GM12878 (cell line): ENCODE measurements at regions of chr19 and their contacts with region 1.

Region 1: GRCh38 chr19:43754503-43755255 is at the start of gene SMG9:
- DNase-seq: peak; percentile 89
- ATAC-seq: peak; percentile 77
- H3K4me3 ChIP-seq: peak within 1 kb of the TSS; percentile 84
- H3K27ac ChIP-seq: peak within 1 kb of the TSS; percentile 98
- H3K4me1 ChIP-seq: peaks cover 46% of the 10 kb centered on the region
- H3K27me3 ChIP-seq: no peaks in the 10 kb centered on the region
- CTCF ChIP-seq: no peak
- EP300 ChIP-seq: peak; percentile 27 to 28; a peak in 1 of 4 replicates
- POLR2A ChIP-seq: peak; percentile 94
- RAD21 ChIP-seq: no peak
- polyA plus RNA-seq, gene SMG9: 0.69 to 4.0 TPM

Region 2: DNA sequence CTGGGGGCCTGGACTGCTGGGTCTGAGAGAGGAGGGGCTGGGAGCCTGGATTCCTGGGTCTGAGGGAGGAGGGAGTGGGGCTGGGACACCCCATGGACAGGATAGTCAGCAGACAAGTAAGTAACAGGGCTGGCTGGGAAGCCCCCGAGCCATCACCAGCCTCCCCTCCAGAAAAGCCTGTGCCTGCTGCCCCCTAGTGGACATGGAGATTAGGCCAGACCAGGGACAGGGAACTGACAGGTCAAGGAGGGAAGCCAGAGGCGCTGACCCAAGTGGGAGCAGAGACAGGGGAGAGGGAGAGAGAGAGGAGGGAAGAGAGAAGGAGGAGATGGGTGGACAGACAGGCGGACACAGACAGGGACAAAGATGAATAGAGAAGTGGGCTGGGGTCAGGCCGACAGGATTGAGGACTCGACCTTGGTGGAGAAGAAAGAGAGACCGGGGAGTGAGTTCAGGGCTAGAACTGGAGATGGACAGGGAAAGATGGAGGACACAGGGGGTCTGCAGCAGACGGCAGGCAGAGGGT is 1819.8 kb before region 1 on chr19:
- CTCF ChIA-PET with region 1: no interaction called
- POLR2A ChIA-PET with region 1: no interaction called
- RAD21 ChIA-PET with region 1: no interaction called
- SMC1A ChIA-PET with region 1: no interaction called
- in situ Hi-C with region 1: loop called (anchors 25 kb)
- intact Hi-C with region 1: no loop called
- DNase-seq: no peak
- ATAC-seq: peak; percentile 93
- H3K4me3 ChIP-seq: no peak overlapping the region
- H3K27ac ChIP-seq: no peak overlapping the region
- H3K4me1 ChIP-seq: peaks cover 23% of the 10 kb centered on the region
- H3K27me3 ChIP-seq: peaks cover 0 to 6% of the 10 kb centered on the region in 2 experiments
- CTCF ChIP-seq: peak; percentile 92 to 97 (median 94); a peak in 5 of 6 replicates
- EP300 ChIP-seq: no peak
- POLR2A ChIP-seq: no peak
- RAD21 ChIP-seq: peak; percentile 94

Region 3: DNA sequence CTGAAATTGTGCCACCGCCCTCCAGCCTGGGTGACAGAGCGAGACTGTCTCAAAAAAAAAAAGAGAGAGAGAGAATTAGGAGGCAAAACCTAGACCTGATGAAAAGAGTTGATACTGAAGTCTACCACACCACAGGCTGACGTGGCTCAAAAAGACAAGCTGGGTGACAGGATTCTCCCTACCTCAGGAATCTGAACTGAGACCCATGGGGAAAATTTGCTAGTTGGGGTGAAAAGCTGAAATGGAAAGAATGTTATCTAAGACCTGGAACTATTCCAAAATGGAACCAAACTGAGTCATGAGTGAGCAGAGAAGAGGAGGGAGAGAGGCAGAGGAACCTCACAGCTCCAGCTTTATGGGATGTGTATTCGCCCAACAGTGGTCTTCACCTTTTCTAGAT is 11.7 kb before region 1 on chr19:
- CTCF ChIA-PET with region 1: interaction called, 20 read pairs
- POLR2A ChIA-PET with region 1: interaction called, 307 read pairs
- RAD21 ChIA-PET with region 1: interaction called, 19 read pairs
- SMC1A ChIA-PET with region 1: interaction called, 12 read pairs
- in situ Hi-C with region 1: no loop called
- intact Hi-C with region 1: no loop called
- DNase-seq: no peak
- ATAC-seq: no peak
- H3K4me3 ChIP-seq: no peak overlapping the region
- H3K27ac ChIP-seq: no peak overlapping the region
- H3K4me1 ChIP-seq: peaks cover 19% of the 10 kb centered on the region
- H3K27me3 ChIP-seq: no peaks in the 10 kb centered on the region
- CTCF ChIP-seq: no peak
- EP300 ChIP-seq: no peak
- POLR2A ChIP-seq: no peak
- RAD21 ChIP-seq: no peak

Region 4: DNA sequence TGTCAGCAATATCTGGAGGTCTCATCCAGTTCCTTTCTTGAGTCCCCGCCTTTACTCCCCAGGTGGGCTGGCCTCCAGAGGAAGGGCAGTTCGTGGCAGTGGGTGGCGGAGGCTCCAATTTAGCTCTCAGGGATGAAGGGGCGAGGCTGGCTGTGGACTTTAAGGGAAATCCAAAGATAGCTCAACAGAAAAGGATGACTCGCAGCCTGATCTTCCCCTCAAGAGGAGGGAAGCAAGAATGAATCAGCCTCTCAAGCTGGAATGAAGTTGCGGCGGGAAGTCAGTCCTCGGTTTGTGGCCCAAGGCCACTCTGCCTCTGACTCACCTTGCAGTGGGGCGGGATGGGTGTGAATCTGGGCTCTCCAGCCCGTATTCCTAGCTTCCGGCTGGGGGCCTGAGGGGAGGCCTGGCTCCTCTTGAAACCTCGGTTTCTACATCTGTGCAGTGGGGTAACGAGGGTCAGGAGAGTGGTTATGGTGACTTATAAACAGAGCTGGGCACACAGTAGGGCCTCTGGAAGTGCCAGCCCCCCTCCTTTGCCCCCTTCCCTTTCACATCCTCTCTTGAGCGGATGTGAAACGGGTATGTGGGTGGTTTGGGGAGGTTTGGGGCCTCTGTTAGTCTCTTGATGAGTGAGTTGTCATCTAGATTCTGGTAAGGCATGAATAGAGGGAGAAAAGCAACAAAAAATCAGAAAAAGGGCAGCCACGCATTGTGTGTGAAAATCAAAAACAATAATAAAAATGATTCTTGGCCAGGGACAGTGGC is 10.6 kb after region 1 on chr19:
- CTCF ChIA-PET with region 1: interaction called, 161 read pairs
- POLR2A ChIA-PET with region 1: interaction called, 307 read pairs
- RAD21 ChIA-PET with region 1: interaction called, 167 read pairs
- SMC1A ChIA-PET with region 1: interaction called, 186 read pairs
- in situ Hi-C with region 1: no loop called
- intact Hi-C with region 1: loop called (anchors 1 kb)
- DNase-seq: peak; percentile 95
- ATAC-seq: peak; percentile 81
- H3K4me3 ChIP-seq: peak overlapping the region; percentile 14; the same call in 1 of the 2 replicates
- H3K27ac ChIP-seq: peak overlapping the region; percentile 100
- H3K4me1 ChIP-seq: peaks cover 57% of the 10 kb centered on the region
- H3K27me3 ChIP-seq: no peaks in the 10 kb centered on the region
- CTCF ChIP-seq: no peak
- EP300 ChIP-seq: peak; percentile 96 to 99
- POLR2A ChIP-seq: peak; percentile 62
- RAD21 ChIP-seq: no peak

Region 5: DNA sequence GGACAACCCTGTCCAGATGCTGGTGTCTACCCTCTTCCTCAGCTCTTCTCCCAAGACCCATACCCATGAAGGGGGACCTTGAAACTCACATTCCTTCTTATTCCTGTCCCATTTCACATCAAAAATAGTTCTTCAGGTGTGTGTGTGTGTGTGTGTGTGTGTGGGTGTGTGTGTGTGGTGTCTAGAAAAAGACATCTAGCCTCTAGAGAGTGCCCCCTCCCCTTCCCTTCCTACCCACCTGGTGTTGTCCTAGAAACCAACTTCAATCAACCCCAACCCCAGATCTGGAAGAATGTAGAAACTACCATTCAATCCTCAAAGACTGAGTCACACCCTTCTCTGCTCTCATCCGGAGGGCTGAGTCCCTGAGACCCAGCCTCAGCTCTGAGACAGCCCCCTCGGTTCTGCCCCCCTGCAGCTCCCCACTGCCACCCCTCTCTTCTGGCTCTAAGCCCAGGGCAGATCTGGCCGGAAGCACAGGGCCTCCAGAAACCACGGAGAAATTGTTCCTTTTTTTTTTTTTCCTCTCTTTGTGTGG is 22.6 kb after region 1 on chr19:
- CTCF ChIA-PET with region 1: interaction called, 324 read pairs
- POLR2A ChIA-PET with region 1: interaction called, 389 read pairs
- RAD21 ChIA-PET with region 1: interaction called, 118 read pairs
- SMC1A ChIA-PET with region 1: interaction called, 325 read pairs
- in situ Hi-C with region 1: no loop called
- intact Hi-C with region 1: loop called (anchors 1 kb)
- DNase-seq: no peak
- ATAC-seq: peak; percentile 29
- H3K4me3 ChIP-seq: peak overlapping the region; percentile 100
- H3K27ac ChIP-seq: peak overlapping the region; percentile 95
- H3K4me1 ChIP-seq: peaks cover 43% of the 10 kb centered on the region
- H3K27me3 ChIP-seq: no peaks in the 10 kb centered on the region
- CTCF ChIP-seq: no peak
- EP300 ChIP-seq: no peak
- POLR2A ChIP-seq: no peak
- RAD21 ChIP-seq: no peak

Region 6: DNA sequence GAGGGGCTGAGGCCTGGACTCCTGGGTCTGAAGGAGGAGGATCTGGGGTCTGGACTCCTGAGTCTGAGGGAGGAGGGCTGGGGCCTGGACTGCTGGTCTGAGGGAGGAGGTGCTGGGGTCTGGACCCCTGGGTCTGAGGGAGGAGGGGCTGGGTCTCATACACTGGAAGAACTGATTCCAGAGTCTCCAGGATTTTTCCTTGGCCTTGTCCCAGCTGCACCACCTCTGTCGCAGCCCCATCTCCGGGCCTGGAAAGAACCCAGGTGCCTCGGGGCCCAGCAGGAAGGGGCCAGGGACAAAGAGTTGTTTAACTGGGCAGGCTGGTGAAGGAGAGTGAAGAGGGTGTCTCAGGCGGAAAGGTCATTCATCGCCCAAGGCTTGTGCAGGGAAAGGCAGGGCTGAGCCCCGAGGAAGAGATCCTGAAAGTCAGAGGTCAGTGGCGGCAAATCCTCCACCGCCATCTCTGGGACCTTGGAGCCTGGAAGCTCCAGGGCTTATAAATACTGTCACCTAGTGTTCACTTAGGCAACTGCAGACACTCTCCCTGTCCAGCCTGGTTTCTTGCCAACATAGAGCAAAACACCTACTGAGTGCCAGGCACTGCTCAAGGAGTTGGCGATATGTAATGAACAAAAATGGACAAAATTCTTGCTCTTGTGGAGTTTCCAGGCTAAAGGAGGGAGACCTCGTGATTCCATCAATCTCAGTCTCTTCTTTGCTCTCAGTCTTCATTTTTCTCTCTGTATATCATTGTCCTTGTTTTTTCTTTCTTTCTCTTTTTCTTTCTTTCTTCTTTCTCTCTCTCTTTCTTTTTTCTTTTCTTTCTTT is 30.5 kb after region 1 on chr19:
- CTCF ChIA-PET with region 1: interaction called, 324 read pairs
- POLR2A ChIA-PET with region 1: interaction called, 389 read pairs
- RAD21 ChIA-PET with region 1: interaction called, 118 read pairs
- SMC1A ChIA-PET with region 1: interaction called, 325 read pairs
- in situ Hi-C with region 1: loop called (anchors 5 kb)
- intact Hi-C with region 1: no loop called
- DNase-seq: no peak
- ATAC-seq: peak; percentile 70
- H3K4me3 ChIP-seq: no peak overlapping the region
- H3K27ac ChIP-seq: peak overlapping the region; percentile 74
- H3K4me1 ChIP-seq: peaks cover 49% of the 10 kb centered on the region
- H3K27me3 ChIP-seq: no peaks in the 10 kb centered on the region
- CTCF ChIP-seq: peak; percentile 98 to 100 (median 100); a peak in 5 of 6 replicates
- EP300 ChIP-seq: no peak
- POLR2A ChIP-seq: no peak
- RAD21 ChIP-seq: peak; percentile 95

Region 7: DNA sequence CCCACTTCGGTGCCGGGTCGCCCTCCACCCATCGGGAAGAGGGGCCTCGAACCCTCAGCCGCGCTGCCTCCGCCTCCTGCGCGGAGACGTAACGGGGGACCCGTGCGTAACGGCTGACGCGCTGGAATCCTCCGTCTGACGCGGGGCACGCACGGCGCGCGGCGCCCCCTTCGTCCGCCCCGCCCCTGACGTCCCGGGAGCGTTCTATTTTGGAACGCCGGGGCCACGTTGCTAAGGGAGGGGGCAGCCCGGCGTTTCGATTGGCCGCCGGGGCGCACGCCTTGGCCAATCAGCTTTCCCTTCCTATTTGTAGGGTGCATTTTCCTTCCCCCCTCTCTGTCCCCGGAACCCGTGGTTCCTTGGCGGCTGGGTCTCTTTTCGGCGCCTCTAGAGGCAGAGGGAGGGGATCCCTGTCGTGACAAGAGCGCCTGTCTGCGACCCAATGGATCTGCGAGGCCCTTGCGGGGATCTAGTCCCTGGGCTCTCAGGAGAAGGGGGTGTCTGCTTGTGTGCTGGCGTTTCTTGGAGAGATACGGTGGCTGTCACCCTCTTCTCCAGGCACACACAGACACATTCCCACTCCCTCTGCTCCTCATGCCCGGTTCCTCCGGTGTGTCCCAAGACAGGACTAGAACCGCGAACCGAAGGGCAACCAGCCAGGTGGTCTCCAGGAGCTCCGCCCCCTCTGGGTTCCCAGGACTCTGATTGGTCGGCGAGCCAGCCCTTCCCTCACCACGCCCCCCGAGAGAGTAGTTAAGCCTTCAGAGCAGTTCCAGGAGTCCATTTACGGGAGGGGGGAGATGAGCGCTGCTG is 1714.7 kb after region 1 on chr19:
- CTCF ChIA-PET with region 1: no interaction called
- POLR2A ChIA-PET with region 1: no interaction called
- RAD21 ChIA-PET with region 1: no interaction called
- SMC1A ChIA-PET with region 1: no interaction called
- in situ Hi-C with region 1: loop called (anchors 25 kb)
- intact Hi-C with region 1: no loop called
- DNase-seq: peak; percentile 78
- ATAC-seq: peak; percentile 87
- H3K4me3 ChIP-seq: peak overlapping the region; percentile 82
- H3K27ac ChIP-seq: peak overlapping the region; percentile 91
- H3K4me1 ChIP-seq: peaks cover 14% of the 10 kb centered on the region
- H3K27me3 ChIP-seq: peaks cover 0 to 2% of the 10 kb centered on the region in 2 experiments; a peak in 2 of 4 replicates
- CTCF ChIP-seq: no peak
- EP300 ChIP-seq: peak in 1 of 2 experiments; percentile 11; a peak in 1 of 4 replicates
- POLR2A ChIP-seq: peak; percentile 79
- RAD21 ChIP-seq: no peak